AG04449 (cell line): ENCODE measurements at regions of chr5 and their contacts with region 1.

Region 1: DNA sequence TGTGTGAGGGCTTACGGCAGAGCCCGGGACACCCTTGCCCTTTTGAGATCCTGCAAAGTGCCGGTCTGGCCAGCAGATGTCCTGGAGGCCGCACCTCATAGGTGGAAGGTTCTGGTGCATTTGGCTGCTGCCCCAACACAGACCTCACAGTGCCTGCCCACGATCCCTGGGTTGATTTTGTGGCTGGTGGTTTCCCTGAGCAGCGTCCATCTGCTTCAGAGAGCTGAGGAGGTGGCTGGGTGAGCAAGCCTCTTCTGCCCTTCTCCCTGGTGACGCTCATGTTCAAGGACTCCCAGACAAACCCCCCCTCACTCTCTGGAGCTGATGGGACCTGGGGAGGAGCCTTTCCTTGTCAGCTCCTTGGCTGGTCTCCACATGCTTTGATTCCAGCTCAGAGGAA is 18.9 kb downstream of the BNIP1 start:
- DNase-seq: no peak
- H3K4me3 ChIP-seq: no peak overlapping the region
- CTCF ChIP-seq: no peak

Region 2: DNA sequence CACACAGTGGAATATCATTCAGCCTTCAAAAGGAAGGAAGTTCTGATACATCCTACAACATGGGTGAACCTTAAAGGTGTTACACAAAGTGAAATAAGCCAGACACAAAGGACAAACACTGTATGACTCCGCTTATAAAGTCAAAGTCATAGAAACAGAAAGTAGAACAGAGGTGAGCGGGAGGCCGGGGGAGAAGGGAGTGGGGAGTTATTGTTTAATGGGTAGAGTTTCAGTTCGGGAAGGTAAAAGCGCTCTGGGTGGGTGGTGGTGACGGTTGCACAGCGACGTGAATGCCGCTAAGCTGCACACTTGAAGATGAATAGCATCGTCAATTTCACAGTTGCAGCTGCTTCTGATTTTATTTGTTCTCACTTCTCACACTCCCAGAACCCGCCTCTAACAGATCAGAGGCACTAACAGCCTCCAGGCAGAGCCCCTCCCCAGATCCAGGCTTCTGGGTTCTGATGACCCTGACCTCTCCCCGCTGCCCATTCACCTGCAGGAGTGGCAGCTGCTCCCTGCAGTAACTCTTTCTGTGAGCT is 15.2 kb after region 1 on chr5:
- CTCF ChIA-PET with region 1: interaction called, 15 read pairs
- POLR2A ChIA-PET with region 1: no interaction called
- DNase-seq: no peak
- H3K4me3 ChIP-seq: no peak overlapping the region
- CTCF ChIP-seq: no peak